ENCODE measurements at regions of chr22 and their contacts with region 1.

Region 1: DNA sequence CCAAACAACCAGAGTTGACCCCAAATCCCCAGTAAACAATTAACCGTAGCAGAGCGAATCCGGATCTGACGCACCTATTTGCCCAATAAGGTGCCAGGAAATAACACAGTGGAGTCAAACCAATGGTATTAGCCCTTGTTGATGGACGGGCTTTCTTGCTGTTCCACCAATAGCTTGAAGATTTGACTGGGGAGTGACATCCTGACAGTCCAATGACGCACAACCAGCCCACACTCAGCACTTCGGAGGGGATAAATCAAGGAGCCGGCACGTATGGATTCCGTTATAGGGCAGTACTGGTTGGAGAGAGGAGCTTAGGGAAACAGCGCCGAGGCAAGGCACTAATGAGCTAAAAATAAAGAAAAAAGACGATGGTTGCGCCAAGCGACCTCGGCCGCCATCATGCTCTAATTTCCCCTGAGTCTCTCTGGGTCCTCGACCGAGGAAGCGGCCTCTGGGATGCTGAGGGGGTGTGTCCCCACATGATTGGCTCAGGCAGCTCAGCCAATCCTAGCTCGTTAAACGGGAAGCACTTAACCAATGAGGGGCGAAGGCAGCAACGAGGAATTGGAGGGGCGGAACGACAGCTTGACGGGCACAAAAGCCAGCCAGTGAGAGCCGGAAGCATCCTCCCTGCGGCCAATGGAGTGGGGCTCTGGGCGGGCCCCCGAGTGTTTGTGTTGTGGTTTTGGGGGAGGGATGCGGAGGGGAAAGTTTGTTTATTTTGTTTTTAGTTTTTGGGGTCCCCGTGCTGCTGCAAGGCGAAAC is 49.5 kb downstream of the FAM83F start:
- DNase-seq: peak; percentile 99
- H3K4me3 Mint-ChIP-seq: peak overlapping the region; percentile 87
- H3K27ac Mint-ChIP-seq: peak overlapping the region; percentile 95
- H3K4me1 Mint-ChIP-seq: peaks cover 52% of the 10 kb centered on the region
- H3K27me3 Mint-ChIP-seq: no peaks in the 10 kb centered on the region
- CTCF ChIP-seq: no peak

Region 2: DNA sequence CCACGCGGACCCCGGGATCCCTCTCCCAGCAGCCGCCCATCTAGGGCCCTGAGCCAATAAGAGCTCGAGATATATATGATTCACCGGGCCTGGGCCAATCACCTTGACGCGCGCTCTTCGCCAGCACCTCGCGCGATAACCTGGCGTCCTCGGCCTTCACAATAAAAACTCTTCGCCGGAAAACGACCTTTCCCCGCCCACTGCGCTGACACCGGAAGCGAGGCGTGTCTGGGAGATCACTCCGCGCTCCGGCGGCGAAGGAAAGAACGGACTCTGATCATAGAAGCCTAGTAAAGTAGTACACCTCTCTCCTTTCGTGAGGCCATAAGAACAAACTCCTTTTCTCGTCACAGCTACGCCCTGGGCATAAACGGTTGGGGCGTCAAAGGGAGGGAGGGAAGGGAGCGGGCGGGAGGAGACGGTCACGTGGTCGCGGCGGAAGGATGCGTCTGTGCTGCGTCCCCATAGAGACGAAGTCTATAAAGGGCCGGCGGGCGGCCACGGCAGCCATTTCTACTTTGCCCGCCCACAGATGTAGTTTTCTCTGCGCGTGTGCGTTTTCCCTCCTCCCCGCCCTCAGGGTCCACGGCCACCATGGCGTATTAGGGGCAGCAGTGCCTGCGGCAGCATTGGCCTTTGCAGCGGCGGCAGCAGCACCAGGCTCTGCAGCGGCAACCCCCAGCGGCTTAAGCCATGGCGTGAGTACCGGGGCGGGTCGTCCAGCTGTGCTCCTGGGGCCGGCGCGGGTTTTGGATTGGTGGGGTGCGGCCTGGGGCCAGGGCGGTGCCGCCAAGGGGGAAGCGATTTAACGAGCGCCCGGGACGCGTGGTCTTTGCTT is 524.0 kb before region 1 on chr22 and contains the start of gene ATF4:
- CTCF ChIA-PET with region 1: interaction called, 471 read pairs
- POLR2A ChIA-PET with region 1: interaction called, 38 read pairs
- intact Hi-C with region 1: no loop called
- DNase-seq: peak; percentile 98
- H3K4me3 Mint-ChIP-seq: peak within 1 kb of the TSS; percentile 93
- H3K27ac Mint-ChIP-seq: peak within 1 kb of the TSS; percentile 100
- H3K4me1 Mint-ChIP-seq: peaks cover 23% of the 10 kb centered on the region
- H3K27me3 Mint-ChIP-seq: no peaks in the 10 kb centered on the region
- CTCF ChIP-seq: no peak
- total RNA-seq, gene ATF4: 717 and 764 TPM in 2 replicates

Region 3: GRCh38 chr22:39997939-39998338 is 46.3 kb before region 1 on chr22:
- CTCF ChIA-PET with region 1: interaction called, 3 read pairs
- POLR2A ChIA-PET with region 1: interaction called, 11 read pairs
- intact Hi-C with region 1: no loop called
- DNase-seq: peak; percentile 95
- H3K4me3 Mint-ChIP-seq: peak overlapping the region; percentile 73
- H3K27ac Mint-ChIP-seq: peak overlapping the region; percentile 61
- H3K4me1 Mint-ChIP-seq: peaks cover 62% of the 10 kb centered on the region
- H3K27me3 Mint-ChIP-seq: peaks cover 8% of the 10 kb centered on the region
- CTCF ChIP-seq: no peak

Region 4: GRCh38 chr22:40055143-40055883 is 11.0 kb after region 1 on chr22:
- CTCF ChIA-PET with region 1: interaction called, 3 read pairs
- POLR2A ChIA-PET with region 1: interaction called, 47 read pairs
- intact Hi-C with region 1: no loop called
- DNase-seq: no peak
- H3K4me3 Mint-ChIP-seq: no peak overlapping the region
- H3K27ac Mint-ChIP-seq: no peak overlapping the region
- H3K4me1 Mint-ChIP-seq: peaks cover 24% of the 10 kb centered on the region
- H3K27me3 Mint-ChIP-seq: no peaks in the 10 kb centered on the region
- CTCF ChIP-seq: no peak

Region 5: GRCh38 chr22:40157330-40157945 is 113.2 kb after region 1 on chr22:
- CTCF ChIA-PET with region 1: interaction called, 3 read pairs
- POLR2A ChIA-PET with region 1: interaction called, 11 read pairs
- intact Hi-C with region 1: no loop called
- DNase-seq: no peak
- H3K4me3 Mint-ChIP-seq: no peak overlapping the region
- H3K27ac Mint-ChIP-seq: no peak overlapping the region
- H3K4me1 Mint-ChIP-seq: no peaks in the 10 kb centered on the region
- H3K27me3 Mint-ChIP-seq: no peaks in the 10 kb centered on the region
- CTCF ChIP-seq: no peak

Region 6: DNA sequence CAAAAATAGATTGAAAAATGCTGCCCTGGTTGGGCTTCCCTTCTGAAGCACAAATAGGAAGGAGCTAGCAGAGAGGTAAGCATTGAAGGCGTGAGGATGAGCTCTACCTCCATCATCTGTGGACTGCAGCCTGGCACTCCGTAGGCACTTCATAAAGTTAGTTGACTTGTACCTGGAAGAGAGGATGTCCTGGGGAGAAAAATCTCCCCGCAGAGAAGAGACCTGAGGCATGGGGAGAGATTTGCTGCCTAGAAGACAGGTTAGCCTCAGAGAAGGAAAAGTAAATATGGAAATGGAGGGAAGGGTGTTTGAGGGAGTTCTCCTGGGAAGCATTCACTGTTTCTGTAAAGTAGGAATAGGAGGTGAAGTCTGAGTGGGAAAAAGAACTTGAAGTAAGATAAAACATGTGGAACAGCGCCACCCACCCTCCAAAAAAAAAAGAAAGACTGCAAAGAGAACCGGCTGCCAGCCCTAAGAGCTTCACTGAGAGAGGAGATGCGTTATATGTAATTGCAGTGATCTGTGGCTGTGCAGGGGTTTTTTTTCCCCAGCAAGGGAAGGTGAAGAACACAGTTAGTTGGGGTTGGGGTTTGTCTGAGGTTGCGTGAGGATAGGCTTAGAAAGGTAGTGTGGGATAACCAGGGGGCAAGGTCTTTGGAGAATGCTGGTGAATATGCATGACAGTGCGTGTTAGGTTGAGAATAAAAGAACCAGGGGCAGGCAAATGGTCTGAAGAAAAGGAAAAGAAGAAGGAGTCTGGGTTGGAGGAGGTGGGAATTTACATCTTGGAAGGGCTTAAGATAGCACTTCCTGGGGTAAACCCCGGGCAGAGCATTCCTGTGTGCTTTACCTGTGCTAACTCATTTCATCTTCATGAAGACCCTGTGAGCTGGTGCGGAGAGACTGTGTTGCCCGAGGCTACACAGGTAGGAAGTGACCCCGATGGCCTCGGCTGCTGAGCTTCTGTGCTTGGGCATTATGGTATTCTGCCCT is 149.4 kb after region 1 on chr22:
- CTCF ChIA-PET with region 1: no interaction called
- POLR2A ChIA-PET with region 1: interaction called, 13 read pairs
- intact Hi-C with region 1: no loop called
- DNase-seq: peak; percentile 15
- H3K4me3 Mint-ChIP-seq: no peak overlapping the region
- H3K27ac Mint-ChIP-seq: peak overlapping the region; percentile 11
- H3K4me1 Mint-ChIP-seq: peaks cover 46% of the 10 kb centered on the region
- H3K27me3 Mint-ChIP-seq: no peaks in the 10 kb centered on the region
- CTCF ChIP-seq: peak; percentile 24

Region 7: DNA sequence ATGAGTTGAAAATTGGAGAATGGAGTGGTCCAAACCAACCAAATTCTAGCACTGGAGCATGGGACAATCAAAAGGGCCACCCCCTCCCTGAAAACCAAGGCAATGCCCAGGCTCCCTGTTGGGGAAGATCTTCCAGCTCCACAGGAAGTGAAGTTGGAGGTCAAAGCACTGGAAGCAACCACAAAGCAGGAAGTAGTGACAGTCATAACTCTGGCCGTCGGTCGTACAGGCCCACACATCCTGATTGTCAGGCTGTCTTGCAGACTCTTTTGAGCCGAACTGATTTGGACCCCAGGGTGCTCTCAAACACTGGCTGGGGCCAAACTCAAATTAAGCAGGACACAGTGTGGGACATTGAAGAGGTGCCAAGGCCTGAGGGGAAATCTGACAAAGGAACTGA is 221.5 kb after region 1 on chr22:
- CTCF ChIA-PET with region 1: no interaction called
- POLR2A ChIA-PET with region 1: no interaction called
- intact Hi-C with region 1: no loop called
- DNase-seq: no peak
- H3K4me3 Mint-ChIP-seq: no peak overlapping the region
- H3K27ac Mint-ChIP-seq: peak overlapping the region; percentile 63
- H3K4me1 Mint-ChIP-seq: peaks cover 1% of the 10 kb centered on the region
- H3K27me3 Mint-ChIP-seq: no peaks in the 10 kb centered on the region
- CTCF ChIP-seq: no peak

Measured in MCF 10A (cell line).